ENCODE measurements at regions of chr9 and their contacts with region 1.

Region 1: GRCh38 chr9:6757456-6758247 is at the start of gene KDM4C:
- DNase-seq: peak; percentile 96
- ATAC-seq: peak; percentile 86
- H3K4me3 Mint-ChIP-seq: peak within 1 kb of the TSS; percentile 96
- H3K27ac Mint-ChIP-seq: peak within 1 kb of the TSS; percentile 99
- H3K4me1 Mint-ChIP-seq: peaks cover 25% of the 10 kb centered on the region
- H3K27me3 Mint-ChIP-seq: no peaks in the 10 kb centered on the region
- CTCF ChIP-seq: no peak
- total RNA-seq, gene KDM4C: 31.1 to 32.9 TPM

Region 2: DNA sequence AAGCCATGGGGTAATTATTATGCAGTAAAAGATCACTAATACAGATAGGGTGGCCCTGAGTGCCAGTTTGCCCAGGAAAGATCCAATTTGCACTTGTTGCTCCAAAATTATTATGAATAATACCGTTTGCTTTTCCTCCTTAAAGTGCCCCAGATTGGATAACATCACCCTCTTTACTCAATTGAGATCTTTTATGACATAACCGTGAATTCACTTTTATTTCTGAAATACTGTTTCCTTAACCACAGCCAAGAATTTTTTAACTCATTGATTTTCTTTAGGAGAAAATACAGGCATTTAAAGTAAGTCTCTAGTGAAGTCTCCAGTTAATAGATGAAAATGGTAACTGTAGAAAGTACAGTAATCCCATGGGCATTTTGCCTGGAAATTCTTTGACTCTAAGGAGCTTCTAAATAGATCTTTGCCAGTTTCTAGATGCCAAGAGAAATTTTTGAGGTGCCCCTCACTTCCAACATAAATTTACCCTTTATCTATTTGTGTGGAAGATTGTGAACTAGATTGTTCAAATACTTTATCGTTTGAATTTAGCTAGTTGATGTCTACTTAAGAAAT is 245.5 kb before region 1 on chr9:
- CTCF ChIA-PET with region 1: no interaction called
- POLR2A ChIA-PET with region 1: no interaction called
- intact Hi-C with region 1: no loop called
- DNase-seq: no peak
- ATAC-seq: no peak
- H3K4me3 Mint-ChIP-seq: no peak overlapping the region
- H3K27ac Mint-ChIP-seq: no peak overlapping the region
- H3K4me1 Mint-ChIP-seq: no peaks in the 10 kb centered on the region
- H3K27me3 Mint-ChIP-seq: no peaks in the 10 kb centered on the region
- CTCF ChIP-seq: no peak

Region 3: GRCh38 chr9:6681147-6681956 is 76.3 kb before region 1 on chr9:
- CTCF ChIA-PET with region 1: no interaction called
- POLR2A ChIA-PET with region 1: interaction called, 28 read pairs
- intact Hi-C with region 1: loop called (anchors 5 kb)
- DNase-seq: peak; percentile 97
- ATAC-seq: peak; percentile 87
- H3K4me3 Mint-ChIP-seq: peak overlapping the region; percentile 96
- H3K27ac Mint-ChIP-seq: peak overlapping the region; percentile 100
- H3K4me1 Mint-ChIP-seq: peaks cover 17% of the 10 kb centered on the region
- H3K27me3 Mint-ChIP-seq: no peaks in the 10 kb centered on the region
- CTCF ChIP-seq: no peak

Region 4: DNA sequence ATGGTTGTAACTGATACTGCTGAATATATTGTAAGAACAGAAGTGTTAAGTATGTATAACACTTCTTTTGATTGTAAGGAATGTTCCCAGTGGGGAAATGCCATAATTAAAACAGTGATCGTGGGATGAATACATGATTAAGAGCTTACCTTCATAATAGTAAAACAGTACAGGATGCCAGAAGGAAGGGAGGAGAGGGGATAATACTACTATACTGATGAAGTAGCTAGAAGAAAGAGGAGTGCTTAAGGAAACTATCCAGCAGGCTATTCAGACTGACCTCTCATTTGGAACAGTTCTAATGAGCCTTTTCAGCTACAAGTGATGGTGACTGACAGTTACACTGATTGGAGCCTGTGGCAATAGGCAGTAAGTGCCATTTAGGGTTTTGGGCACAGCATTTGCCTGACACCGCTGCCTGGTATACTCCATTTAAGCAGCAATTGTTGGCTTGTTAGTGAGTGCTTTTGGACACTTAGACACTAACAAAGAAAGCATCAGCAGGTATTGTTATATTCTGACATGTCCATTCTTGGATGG is 33.7 kb before region 1 on chr9:
- CTCF ChIA-PET with region 1: no interaction called
- POLR2A ChIA-PET with region 1: no interaction called
- intact Hi-C with region 1: no loop called
- DNase-seq: no peak
- ATAC-seq: no peak
- H3K4me3 Mint-ChIP-seq: no peak overlapping the region
- H3K27ac Mint-ChIP-seq: no peak overlapping the region
- H3K4me1 Mint-ChIP-seq: no peaks in the 10 kb centered on the region
- H3K27me3 Mint-ChIP-seq: no peaks in the 10 kb centered on the region
- CTCF ChIP-seq: no peak

Measured in activated CD8-positive, alpha-beta T cell treated with anti-CD3 and anti-CD28 coated beads for 36 hours (primary cell).